ENCODE measurements at regions of chr1 and their contacts with region 1.

Region 1: GRCh38 chr1:179809506-179810366 is 66.6 kb downstream of the FAM163A start:
- DNase-seq: peak; percentile 52 to 89 (median 60)
- ATAC-seq: peak; percentile 80
- H3K4me3 ChIP-seq: no peak overlapping the region
- H3K4me3 Mint-ChIP-seq: no peak overlapping the region
- H3K27ac ChIP-seq: no peak overlapping the region
- H3K27ac Mint-ChIP-seq: peak overlapping the region; percentile 8
- H3K4me1 ChIP-seq: peaks cover 13% of the 10 kb centered on the region
- H3K4me1 Mint-ChIP-seq: peaks cover 9% of the 10 kb centered on the region
- H3K27me3 ChIP-seq: no peaks in the 10 kb centered on the region
- H3K27me3 Mint-ChIP-seq: peaks cover 5% of the 10 kb centered on the region
- CTCF ChIP-seq: peak; percentile 88

Region 2: GRCh38 chr1:178542560-178543356 is 1267.0 kb before region 1 on chr1:
- CTCF ChIA-PET with region 1: no interaction called
- POLR2A ChIA-PET with region 1: no interaction called
- intact Hi-C with region 1: loop called (anchors 10 kb)
- DNase-seq: peak; percentile 59 to 91 (median 84)
- ATAC-seq: peak; percentile 90
- H3K4me3 ChIP-seq: peak overlapping the region; percentile 77
- H3K4me3 Mint-ChIP-seq: peak overlapping the region; percentile 93
- H3K27ac ChIP-seq: no peak overlapping the region
- H3K27ac Mint-ChIP-seq: peak overlapping the region; percentile 39
- H3K4me1 ChIP-seq: peaks cover 16% of the 10 kb centered on the region
- H3K4me1 Mint-ChIP-seq: peaks cover 10% of the 10 kb centered on the region
- H3K27me3 ChIP-seq: no peaks in the 10 kb centered on the region
- H3K27me3 Mint-ChIP-seq: no peaks in the 10 kb centered on the region
- CTCF ChIP-seq: peak; percentile 99

Region 3: GRCh38 chr1:179081687-179082332 is 727.9 kb before region 1 on chr1 and contains the start of gene TOR3A:
- CTCF ChIA-PET with region 1: interaction called, 7 read pairs
- POLR2A ChIA-PET with region 1: interaction called, 3 read pairs
- intact Hi-C with region 1: loop called in 1 of 2 experiments (anchors 5 kb)
- DNase-seq: peak; percentile 54 to 86 (median 74)
- ATAC-seq: peak; percentile 32
- H3K4me3 ChIP-seq: peak within 1 kb of the TSS; percentile 82
- H3K4me3 Mint-ChIP-seq: peak within 1 kb of the TSS; percentile 99
- H3K27ac ChIP-seq: peak within 1 kb of the TSS; percentile 68 to 81
- H3K27ac Mint-ChIP-seq: peak within 1 kb of the TSS; percentile 92
- H3K4me1 ChIP-seq: peaks cover 32% of the 10 kb centered on the region
- H3K4me1 Mint-ChIP-seq: peaks cover 32% of the 10 kb centered on the region
- H3K27me3 ChIP-seq: no peaks in the 10 kb centered on the region
- H3K27me3 Mint-ChIP-seq: no peaks in the 10 kb centered on the region
- CTCF ChIP-seq: no peak
- total RNA-seq, gene TOR3A: 17.2 TPM

Region 4: DNA sequence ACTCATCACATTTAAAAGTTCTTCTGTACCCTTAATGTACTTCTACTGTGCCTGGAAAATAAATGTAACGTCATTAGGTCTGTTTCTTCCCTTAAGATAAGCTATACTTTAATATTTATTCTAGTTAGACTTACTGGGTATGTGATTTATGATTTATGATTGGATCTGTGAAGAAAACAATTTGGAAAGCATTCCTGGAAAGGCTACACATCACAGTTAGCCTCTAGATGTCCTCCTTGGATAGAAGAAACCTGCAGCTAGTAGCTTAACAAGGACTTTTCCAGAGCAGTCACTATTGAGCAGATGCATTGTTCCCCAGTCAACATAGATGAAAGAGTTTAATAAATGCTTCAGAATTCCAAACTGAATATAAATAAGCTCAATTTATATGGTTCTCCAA is 558.1 kb before region 1 on chr1:
- CTCF ChIA-PET with region 1: no interaction called
- POLR2A ChIA-PET with region 1: no interaction called
- intact Hi-C with region 1: loop called in 1 of 2 experiments (anchors 10 kb)
- DNase-seq: peak in 3 of 14 experiments; percentile 39 to 44 (median 40)
- ATAC-seq: no peak
- H3K4me3 ChIP-seq: no peak overlapping the region
- H3K4me3 Mint-ChIP-seq: no peak overlapping the region
- H3K27ac ChIP-seq: no peak overlapping the region
- H3K27ac Mint-ChIP-seq: no peak overlapping the region
- H3K4me1 ChIP-seq: no peaks in the 10 kb centered on the region
- H3K4me1 Mint-ChIP-seq: no peaks in the 10 kb centered on the region
- H3K27me3 ChIP-seq: no peaks in the 10 kb centered on the region
- H3K27me3 Mint-ChIP-seq: no peaks in the 10 kb centered on the region
- CTCF ChIP-seq: peak; percentile 56

Region 5: DNA sequence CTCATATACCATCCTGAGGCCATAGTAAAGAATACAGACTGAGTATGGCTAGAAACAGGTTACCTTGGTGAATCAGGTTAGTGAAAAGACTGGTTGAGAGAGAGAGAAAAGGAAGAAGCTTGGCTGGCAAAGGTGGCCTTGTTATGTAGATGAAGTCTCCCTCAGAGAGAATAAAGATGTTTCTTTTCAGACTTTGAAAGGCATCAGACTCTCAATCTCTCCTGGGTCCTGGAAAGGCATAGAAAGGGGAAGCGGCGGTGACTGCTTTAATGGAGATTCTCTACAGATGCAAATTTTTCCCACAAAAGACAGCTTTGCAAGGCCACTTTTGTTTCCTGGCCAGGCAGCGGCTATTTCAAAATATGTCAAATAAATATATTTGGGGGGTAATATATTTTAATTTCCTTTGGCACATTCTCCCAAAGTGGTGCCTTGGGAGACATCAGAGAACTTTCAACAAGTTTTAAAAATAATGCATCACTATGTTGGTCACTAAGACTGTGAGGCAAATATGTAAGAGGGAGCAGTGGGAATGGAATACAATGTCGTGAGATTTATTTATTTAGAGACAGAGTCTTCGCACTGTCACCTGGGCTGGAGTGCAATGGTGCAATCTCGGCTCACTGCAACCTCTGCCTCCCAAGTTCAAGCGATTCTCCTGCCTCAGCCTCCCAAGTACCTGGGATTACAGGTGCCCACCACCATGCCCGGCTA is 280.1 kb before region 1 on chr1:
- CTCF ChIA-PET with region 1: no interaction called
- POLR2A ChIA-PET with region 1: no interaction called
- intact Hi-C with region 1: no loop called
- DNase-seq: no peak
- ATAC-seq: no peak
- H3K4me3 ChIP-seq: no peak overlapping the region
- H3K4me3 Mint-ChIP-seq: no peak overlapping the region
- H3K27ac ChIP-seq: no peak overlapping the region
- H3K27ac Mint-ChIP-seq: no peak overlapping the region
- H3K4me1 ChIP-seq: no peaks in the 10 kb centered on the region
- H3K4me1 Mint-ChIP-seq: no peaks in the 10 kb centered on the region
- H3K27me3 ChIP-seq: no peaks in the 10 kb centered on the region
- H3K27me3 Mint-ChIP-seq: peaks cover 29% of the 10 kb centered on the region
- CTCF ChIP-seq: no peak

Region 6: GRCh38 chr1:179831852-179832699 is 22.3 kb after region 1 on chr1:
- CTCF ChIA-PET with region 1: interaction called, 8 read pairs
- POLR2A ChIA-PET with region 1: interaction called, 32 read pairs
- intact Hi-C with region 1: loop called in 1 of 2 experiments (anchors 2 kb)
- DNase-seq: peak in 5 of 14 experiments; percentile 6 to 64 (median 58)
- ATAC-seq: peak; percentile 83
- H3K4me3 ChIP-seq: peak overlapping the region; percentile 17
- H3K4me3 Mint-ChIP-seq: peak overlapping the region; percentile 85
- H3K27ac ChIP-seq: peak overlapping the region; percentile 10 to 44
- H3K27ac Mint-ChIP-seq: peak overlapping the region; percentile 84
- H3K4me1 ChIP-seq: peaks cover 29% of the 10 kb centered on the region
- H3K4me1 Mint-ChIP-seq: peaks cover 33% of the 10 kb centered on the region
- H3K27me3 ChIP-seq: no peaks in the 10 kb centered on the region
- H3K27me3 Mint-ChIP-seq: no peaks in the 10 kb centered on the region
- CTCF ChIP-seq: no peak

Region 7: GRCh38 chr1:179954493-179955297 is 145.0 kb after region 1 on chr1 and contains the start of gene CEP350:
- CTCF ChIA-PET with region 1: interaction called, 5 read pairs
- POLR2A ChIA-PET with region 1: interaction called, 14 read pairs
- intact Hi-C with region 1: loop called in 1 of 2 experiments (anchors 5 kb)
- DNase-seq: peak; percentile 95 to 100 (median 97)
- ATAC-seq: peak; percentile 84
- H3K4me3 ChIP-seq: peak within 1 kb of the TSS; percentile 87
- H3K4me3 Mint-ChIP-seq: peak within 1 kb of the TSS; percentile 96
- H3K27ac ChIP-seq: peak within 1 kb of the TSS; percentile 82 to 90
- H3K27ac Mint-ChIP-seq: peak within 1 kb of the TSS; percentile 94
- H3K4me1 ChIP-seq: peaks cover 23% of the 10 kb centered on the region
- H3K4me1 Mint-ChIP-seq: peaks cover 71% of the 10 kb centered on the region
- H3K27me3 ChIP-seq: no peaks in the 10 kb centered on the region
- H3K27me3 Mint-ChIP-seq: no peaks in the 10 kb centered on the region
- CTCF ChIP-seq: no peak
- total RNA-seq, gene CEP350: 45.5 to 51.4 TPM

Region 8: GRCh38 chr1:180178511-180179161 is 368.9 kb after region 1 on chr1:
- CTCF ChIA-PET with region 1: no interaction called
- POLR2A ChIA-PET with region 1: interaction called, 3 read pairs
- intact Hi-C with region 1: loop called in 1 of 2 experiments (anchors 5 kb)
- DNase-seq: peak; percentile 44 to 76 (median 61)
- ATAC-seq: peak; percentile 80
- H3K4me3 ChIP-seq: no peak overlapping the region
- H3K4me3 Mint-ChIP-seq: no peak overlapping the region
- H3K27ac ChIP-seq: no peak overlapping the region
- H3K27ac Mint-ChIP-seq: no peak overlapping the region
- H3K4me1 ChIP-seq: no peaks in the 10 kb centered on the region
- H3K4me1 Mint-ChIP-seq: no peaks in the 10 kb centered on the region
- H3K27me3 ChIP-seq: no peaks in the 10 kb centered on the region
- H3K27me3 Mint-ChIP-seq: no peaks in the 10 kb centered on the region
- CTCF ChIP-seq: peak; percentile 98

Measured in CD4-positive, alpha-beta T cell (primary cell).